ENCODE measurements at regions of chrX and their contacts with region 1.

Region 1: GRCh38 chrX:153924149-153924861 is 1.8 kb downstream of the ARHGAP4 start:
- DNase-seq: no peak
- H3K4me3 Mint-ChIP-seq: no peak overlapping the region
- H3K27ac Mint-ChIP-seq: no peak overlapping the region
- H3K4me1 Mint-ChIP-seq: peaks cover 8% of the 10 kb centered on the region
- H3K27me3 Mint-ChIP-seq: peaks cover 33% of the 10 kb centered on the region
- CTCF ChIP-seq: no peak

Region 2: GRCh38 chrX:153947009-153947769 is 22.9 kb after region 1 on chrX:
- CTCF ChIA-PET with region 1: interaction called, 12 read pairs
- intact Hi-C with region 1: no loop called
- DNase-seq: peak; percentile 92
- H3K4me3 Mint-ChIP-seq: no peak overlapping the region
- H3K27ac Mint-ChIP-seq: peak overlapping the region; percentile 21
- H3K4me1 Mint-ChIP-seq: no peaks in the 10 kb centered on the region
- H3K27me3 Mint-ChIP-seq: no peaks in the 10 kb centered on the region
- CTCF ChIP-seq: peak; percentile 81

Region 3: GRCh38 chrX:153992180-153992579 is 67.9 kb after region 1 on chrX:
- CTCF ChIA-PET with region 1: no interaction called
- intact Hi-C with region 1: no loop called
- DNase-seq: no peak
- H3K4me3 Mint-ChIP-seq: no peak overlapping the region
- H3K27ac Mint-ChIP-seq: no peak overlapping the region
- H3K4me1 Mint-ChIP-seq: no peaks in the 10 kb centered on the region
- H3K27me3 Mint-ChIP-seq: no peaks in the 10 kb centered on the region
- CTCF ChIP-seq: no peak

Measured in Calu3 (cell line).